ENCODE measurements at regions of chr18 and their contacts with region 1.

Region 1: DNA sequence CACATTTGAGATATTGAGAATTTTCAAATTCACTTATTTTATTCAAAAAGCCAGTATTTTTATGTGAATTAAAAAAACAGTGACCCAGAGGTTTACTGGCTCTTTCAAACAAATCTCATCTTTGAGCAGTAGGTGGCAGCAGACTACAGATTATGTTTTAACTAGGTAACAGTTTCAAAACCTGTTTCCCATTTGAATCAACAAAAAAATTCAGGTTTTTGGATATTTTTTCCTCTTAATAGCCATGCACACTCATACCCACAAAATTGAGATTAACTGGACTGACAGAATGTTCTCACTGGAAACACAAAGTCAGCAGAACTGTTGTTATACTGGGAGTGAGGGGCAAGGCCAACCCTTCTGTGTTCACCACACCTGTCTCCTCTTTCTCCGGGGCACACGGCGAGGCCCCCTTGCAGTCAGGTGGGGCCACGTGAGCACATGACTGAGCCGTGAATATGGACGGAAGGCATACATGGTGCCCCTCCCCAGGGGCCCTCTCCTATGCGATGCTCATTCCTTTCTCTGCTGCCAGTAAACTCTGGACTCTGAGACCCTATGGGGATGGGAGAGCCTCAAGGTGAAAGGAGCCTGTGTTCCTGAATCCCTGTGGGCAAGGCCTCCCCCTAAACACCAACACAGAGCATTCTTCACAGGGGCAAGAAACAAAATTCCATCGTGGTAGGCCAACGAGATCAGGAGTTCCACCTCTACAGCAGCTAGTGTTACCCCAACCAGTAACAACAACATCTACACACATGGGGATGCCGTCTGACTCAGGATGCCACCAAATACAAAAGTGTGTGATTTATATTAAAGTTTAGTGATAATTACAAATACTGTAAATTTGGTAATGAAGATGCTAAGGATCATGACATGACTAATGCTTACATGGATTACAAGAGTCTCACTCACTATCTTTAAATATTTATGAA is 80.4 kb downstream of the LPIN2 start:
- DNase-seq: peak; percentile 87
- ATAC-seq: peak; percentile 61
- H3K4me3 ChIP-seq: no peak overlapping the region
- H3K27ac ChIP-seq: no peak overlapping the region
- H3K4me1 ChIP-seq: no peaks in the 10 kb centered on the region
- H3K27me3 ChIP-seq: no peaks in the 10 kb centered on the region
- CTCF ChIP-seq: peak; percentile 89

Region 2: DNA sequence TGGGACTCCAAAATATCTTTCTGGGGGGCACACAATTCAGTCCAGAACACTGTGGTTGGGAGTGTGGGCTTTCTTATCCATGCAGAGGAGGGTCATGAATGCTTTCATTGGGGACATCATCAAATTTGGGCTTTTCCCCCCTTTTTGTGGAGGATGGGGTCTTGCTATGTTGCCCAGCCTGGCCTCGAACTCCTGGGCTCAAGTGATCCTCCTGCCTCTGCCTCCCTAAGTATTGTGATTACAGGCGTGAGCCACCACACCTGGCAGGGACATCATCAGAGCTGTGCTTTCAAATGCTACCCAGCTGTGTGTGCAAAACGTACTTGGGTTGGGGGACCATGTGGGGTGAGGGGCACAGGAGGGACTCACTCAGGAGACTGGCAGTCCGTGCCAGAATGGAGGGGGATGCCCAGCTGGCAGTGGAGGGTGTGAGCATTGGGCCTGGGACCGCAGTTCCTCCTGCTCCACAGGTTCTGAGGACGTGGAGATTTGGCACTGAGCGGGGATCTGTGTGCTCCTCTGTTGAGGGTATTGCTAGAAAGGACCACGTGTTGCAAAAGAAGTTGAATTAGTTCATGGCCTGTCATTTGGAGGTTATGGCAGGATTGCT is 61.3 kb before region 1 on chr18:
- CTCF ChIA-PET with region 1: no interaction called
- POLR2A ChIA-PET with region 1: no interaction called
- intact Hi-C with region 1: no loop called
- DNase-seq: no peak
- ATAC-seq: no peak
- H3K4me3 ChIP-seq: no peak overlapping the region
- H3K27ac ChIP-seq: no peak overlapping the region
- H3K4me1 ChIP-seq: no peaks in the 10 kb centered on the region
- H3K27me3 ChIP-seq: 0 out of 2 replicates have a peak, but pooled peaks cover 9% of the 10 kb centered on the region
- CTCF ChIP-seq: no peak

Region 3: GRCh38 chr18:3002732-3003131 is 70.2 kb after region 1 on chr18:
- CTCF ChIA-PET with region 1: interaction called, 17 read pairs
- POLR2A ChIA-PET with region 1: no interaction called
- intact Hi-C with region 1: no loop called
- DNase-seq: no peak
- ATAC-seq: no peak
- H3K4me3 ChIP-seq: no peak overlapping the region
- H3K27ac ChIP-seq: no peak overlapping the region
- H3K4me1 ChIP-seq: peaks cover under 1% of the 10 kb centered on the region; the same call in 1 of the 2 replicates
- H3K27me3 ChIP-seq: no peaks in the 10 kb centered on the region
- CTCF ChIP-seq: no peak

Region 4: DNA sequence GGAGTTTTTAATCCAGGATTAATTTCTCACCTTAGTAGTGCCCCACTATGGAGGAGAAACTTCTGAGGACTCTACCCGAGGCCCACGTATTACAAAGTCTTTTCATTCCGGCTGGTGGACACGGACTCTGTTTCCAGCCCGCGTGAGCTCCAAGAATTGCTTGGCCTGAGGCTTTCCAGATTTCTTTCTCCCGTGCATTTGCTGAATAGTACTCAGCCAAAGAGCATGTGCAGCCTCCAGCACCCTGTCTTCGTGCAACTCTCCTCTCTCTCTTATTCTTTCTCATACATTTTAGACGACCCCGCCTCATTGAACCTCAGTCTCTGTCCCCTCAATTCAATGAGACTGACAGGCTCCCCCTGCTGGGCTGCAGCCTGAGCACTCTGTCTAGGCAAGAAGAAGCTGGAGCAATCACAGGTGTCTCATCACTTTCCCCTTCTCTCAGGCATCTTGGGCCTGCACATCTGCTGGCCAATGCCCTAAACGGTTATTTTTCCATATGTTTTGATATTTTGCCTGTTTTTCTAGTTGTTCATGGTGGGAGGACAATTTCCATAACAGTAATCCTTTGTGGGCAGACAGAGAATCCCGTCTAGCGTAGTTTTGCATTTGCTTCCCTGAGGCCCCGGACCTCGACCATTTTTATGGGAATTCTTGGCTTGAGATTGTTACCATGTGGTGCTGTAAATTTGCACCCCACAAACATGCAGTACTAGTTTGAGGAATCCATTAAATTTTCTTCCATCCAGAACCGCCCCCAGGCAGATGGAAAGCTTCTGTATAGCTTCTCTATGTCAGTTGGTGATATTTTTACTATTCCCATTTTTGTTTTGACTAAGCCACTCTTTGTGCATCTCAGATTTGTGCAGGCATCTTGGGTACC is 130.5 kb after region 1 on chr18:
- CTCF ChIA-PET with region 1: interaction called, 4 read pairs
- POLR2A ChIA-PET with region 1: no interaction called
- intact Hi-C with region 1: loop called (anchors 1 kb)
- DNase-seq: peak; percentile 57
- ATAC-seq: peak; percentile 75
- H3K4me3 ChIP-seq: no peak overlapping the region
- H3K27ac ChIP-seq: no peak overlapping the region
- H3K4me1 ChIP-seq: peaks cover 9% of the 10 kb centered on the region
- H3K27me3 ChIP-seq: no peaks in the 10 kb centered on the region
- CTCF ChIP-seq: peak; percentile 92

Region 5: GRCh38 chr18:3151399-3152264 is 219.1 kb after region 1 on chr18:
- CTCF ChIA-PET with region 1: interaction called, 3 read pairs
- POLR2A ChIA-PET with region 1: no interaction called
- intact Hi-C with region 1: loop called (anchors 2 kb)
- DNase-seq: peak; percentile 59
- ATAC-seq: no peak
- H3K4me3 ChIP-seq: peak overlapping the region; percentile 50; the same call in 1 of the 2 replicates
- H3K27ac ChIP-seq: no peak overlapping the region
- H3K4me1 ChIP-seq: no peaks in the 10 kb centered on the region
- H3K27me3 ChIP-seq: no peaks in the 10 kb centered on the region
- CTCF ChIP-seq: peak; percentile 74

Region 6: DNA sequence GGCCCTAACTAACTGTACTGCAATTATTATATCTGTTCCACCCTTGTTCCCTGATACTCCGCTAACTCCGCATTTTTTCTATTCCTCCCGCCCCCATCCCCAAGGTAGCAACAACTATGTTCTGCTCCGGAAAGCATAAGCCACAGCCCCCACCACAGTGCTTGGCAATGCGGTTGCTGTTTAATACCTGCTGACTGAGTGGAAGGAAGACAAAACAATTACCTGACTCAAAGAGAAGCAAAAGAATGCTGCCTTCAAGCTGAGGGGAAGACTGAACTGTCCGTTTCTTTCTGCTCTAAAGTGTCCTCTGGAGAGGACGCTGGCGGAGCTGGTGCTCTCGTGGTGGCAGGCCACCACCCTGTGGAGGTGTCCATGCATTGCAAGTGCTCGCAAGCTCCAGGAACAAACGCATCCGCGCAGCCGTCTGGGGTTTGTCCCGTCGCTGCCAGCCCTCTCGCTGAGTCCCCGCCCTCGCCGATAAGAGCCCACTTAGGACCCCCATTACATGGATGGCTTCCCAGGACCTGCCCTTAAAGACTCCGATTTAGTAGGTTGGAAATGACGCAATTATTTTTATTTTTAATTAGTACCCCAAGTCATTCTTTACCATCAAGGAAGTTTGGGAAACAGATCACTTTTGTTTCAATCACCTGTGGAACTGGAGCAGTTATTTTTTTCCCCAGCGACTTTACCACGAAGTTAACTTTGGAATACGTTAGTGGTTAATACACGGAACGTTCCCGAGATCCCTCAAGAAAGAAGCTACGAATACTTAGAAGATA is 313.5 kb after region 1 on chr18:
- CTCF ChIA-PET with region 1: interaction called, 9 read pairs
- POLR2A ChIA-PET with region 1: no interaction called
- intact Hi-C with region 1: loop called (anchors 1 kb)
- DNase-seq: peak; percentile 94
- ATAC-seq: peak; percentile 58
- H3K4me3 ChIP-seq: peak overlapping the region; percentile 92
- H3K27ac ChIP-seq: peak overlapping the region; percentile 79
- H3K4me1 ChIP-seq: peaks cover 27% of the 10 kb centered on the region
- H3K27me3 ChIP-seq: no peaks in the 10 kb centered on the region
- CTCF ChIP-seq: peak; percentile 97

Region 7: GRCh38 chr18:3525870-3526420 is 593.4 kb after region 1 on chr18:
- CTCF ChIA-PET with region 1: no interaction called
- POLR2A ChIA-PET with region 1: no interaction called
- intact Hi-C with region 1: no loop called
- DNase-seq: no peak
- ATAC-seq: no peak
- H3K4me3 ChIP-seq: no peak overlapping the region
- H3K27ac ChIP-seq: no peak overlapping the region
- H3K4me1 ChIP-seq: no peaks in the 10 kb centered on the region
- H3K27me3 ChIP-seq: no peaks in the 10 kb centered on the region
- CTCF ChIP-seq: no peak

Measured in PC-3 (cell line).